HAP-1 (cell line): ENCODE measurements at regions of chr9 and their contacts with region 1.

Region 1: GRCh38 chr9:5886114-5886939 is 4.4 kb upstream of the MLANA start:
- DNase-seq: peak; percentile 72 to 92
- H3K4me3 ChIP-seq: no peak overlapping the region
- H3K4me1 ChIP-seq: no peaks in the 10 kb centered on the region
- H3K27me3 ChIP-seq: no peaks in the 10 kb centered on the region

Region 2: DNA sequence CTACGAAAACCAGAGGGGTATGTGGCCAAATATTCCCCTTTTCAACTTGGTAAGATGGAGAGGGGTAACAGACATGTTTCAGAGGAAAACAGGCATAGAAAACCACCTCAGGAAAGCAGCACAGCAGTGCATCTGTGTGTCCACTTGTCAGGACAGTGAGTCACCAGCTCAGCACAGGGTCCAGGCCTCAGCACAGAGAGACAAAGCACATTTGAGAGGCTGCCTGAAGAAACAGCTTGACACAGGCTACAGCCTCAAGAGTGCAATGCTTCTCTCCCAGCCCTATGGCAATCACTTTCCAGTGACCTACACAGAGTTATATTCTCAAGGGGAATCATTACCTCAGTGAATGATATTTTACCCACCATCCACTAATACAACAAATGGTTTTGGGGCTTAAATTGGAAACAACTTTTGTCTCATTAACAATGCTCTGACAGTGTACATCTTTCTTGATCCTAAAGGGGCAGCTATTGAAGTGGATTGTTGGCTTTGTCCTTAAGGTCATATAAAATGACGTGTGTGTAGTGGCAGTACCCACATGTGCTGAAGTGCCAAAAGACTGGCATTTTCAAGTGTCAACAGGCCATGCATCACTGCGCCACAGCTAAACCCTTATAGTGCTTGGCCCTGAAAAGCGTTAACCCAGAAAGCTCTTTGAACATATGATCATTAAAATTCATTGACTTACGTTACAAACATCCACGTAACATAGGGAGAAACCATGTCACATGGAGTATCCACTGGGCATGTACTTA is 99.8 kb before region 1 on chr9:
- in situ Hi-C with region 1: no loop called
- DNase-seq: no peak
- H3K4me3 ChIP-seq: no peak overlapping the region
- H3K4me1 ChIP-seq: no peaks in the 10 kb centered on the region; the same call in none of the 2 replicates
- H3K27me3 ChIP-seq: no peaks in the 10 kb centered on the region

Region 3: DNA sequence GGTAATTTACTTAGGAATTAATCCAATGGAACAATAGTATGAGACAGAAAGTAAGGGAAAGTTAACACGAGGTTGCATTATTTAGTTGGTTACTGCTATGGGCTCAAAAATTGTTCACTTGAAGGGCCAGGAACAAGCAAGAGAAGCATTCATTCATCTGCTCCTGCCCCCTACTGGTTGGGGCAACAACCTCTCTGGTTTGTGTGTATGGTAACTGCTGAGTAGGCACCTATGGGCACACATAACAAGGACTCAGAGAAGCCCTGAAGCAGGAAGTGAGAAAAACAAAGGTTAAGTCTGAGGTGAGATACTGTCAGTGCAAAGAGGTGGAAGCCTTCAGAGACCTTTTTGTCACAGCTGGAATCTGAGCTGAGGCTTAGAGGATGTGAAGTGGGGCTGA is 163.5 kb after region 1 on chr9:
- in situ Hi-C with region 1: loop called (anchors 5 kb)
- DNase-seq: peak in 1 of 2 experiments; percentile 28
- H3K4me3 ChIP-seq: no peak overlapping the region
- H3K4me1 ChIP-seq: no peaks in the 10 kb centered on the region
- H3K27me3 ChIP-seq: no peaks in the 10 kb centered on the region